PC-9 (cell line): ENCODE measurements at regions of chr6 and their contacts with region 1.

Region 1: GRCh38 chr6:41936073-41936837 is 5.4 kb downstream of the CCND3 start:
- DNase-seq: peak; percentile 72
- H3K4me3 ChIP-seq: no peak overlapping the region
- H3K27ac ChIP-seq: peak overlapping the region; percentile 41
- H3K4me1 ChIP-seq: peaks cover 19% of the 10 kb centered on the region; the same call in 1 of the 2 replicates
- H3K27me3 ChIP-seq: no peaks in the 10 kb centered on the region
- CTCF ChIP-seq: peak; percentile 91

Region 2: GRCh38 chr6:41801380-41801779 is 134.9 kb before region 1 on chr6:
- CTCF ChIA-PET with region 1: no interaction called
- POLR2A ChIA-PET with region 1: no interaction called
- intact Hi-C with region 1: loop called (anchors 5 kb)
- DNase-seq: peak in 1 of 2 experiments; percentile 25
- H3K4me3 ChIP-seq: no peak overlapping the region
- H3K27ac ChIP-seq: no peak overlapping the region
- H3K4me1 ChIP-seq: no peaks in the 10 kb centered on the region
- H3K27me3 ChIP-seq: no peaks in the 10 kb centered on the region
- CTCF ChIP-seq: peak; percentile 72

Region 3: DNA sequence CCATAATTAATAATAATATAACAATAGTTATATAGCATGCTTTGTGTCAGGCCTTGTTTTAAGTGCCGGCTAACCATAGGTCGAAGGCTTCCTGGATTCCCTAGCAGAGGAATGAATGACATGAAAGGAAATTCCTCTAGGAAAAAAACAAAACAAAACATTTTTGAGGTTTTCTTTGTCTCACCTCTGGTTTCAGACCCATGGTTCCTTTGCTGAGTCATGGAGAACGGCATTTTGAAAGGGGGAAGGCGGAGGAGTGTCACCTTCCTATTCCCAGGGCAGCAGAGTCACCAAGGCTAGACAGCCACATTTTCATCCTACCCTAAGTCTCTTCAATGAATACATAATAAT is 30.7 kb after region 1 on chr6:
- CTCF ChIA-PET with region 1: no interaction called
- POLR2A ChIA-PET with region 1: interaction called, 6 read pairs
- intact Hi-C with region 1: loop called (anchors 1 kb)
- DNase-seq: peak; percentile 74 to 88
- H3K4me3 ChIP-seq: no peak overlapping the region; the same call in 1 of the 2 replicates
- H3K27ac ChIP-seq: peak overlapping the region; percentile 98
- H3K4me1 ChIP-seq: peaks cover 44% of the 10 kb centered on the region
- H3K27me3 ChIP-seq: no peaks in the 10 kb centered on the region
- CTCF ChIP-seq: no peak